GM13977 (cell line): ENCODE measurements at regions of chr2 and their contacts with region 1.

Region 1: GRCh38 chr2:42663106-42663780 is 94.8 kb downstream of the MTA3 start:
- DNase-seq: peak; percentile 72
- CTCF ChIP-seq: peak; percentile 99

Region 2: DNA sequence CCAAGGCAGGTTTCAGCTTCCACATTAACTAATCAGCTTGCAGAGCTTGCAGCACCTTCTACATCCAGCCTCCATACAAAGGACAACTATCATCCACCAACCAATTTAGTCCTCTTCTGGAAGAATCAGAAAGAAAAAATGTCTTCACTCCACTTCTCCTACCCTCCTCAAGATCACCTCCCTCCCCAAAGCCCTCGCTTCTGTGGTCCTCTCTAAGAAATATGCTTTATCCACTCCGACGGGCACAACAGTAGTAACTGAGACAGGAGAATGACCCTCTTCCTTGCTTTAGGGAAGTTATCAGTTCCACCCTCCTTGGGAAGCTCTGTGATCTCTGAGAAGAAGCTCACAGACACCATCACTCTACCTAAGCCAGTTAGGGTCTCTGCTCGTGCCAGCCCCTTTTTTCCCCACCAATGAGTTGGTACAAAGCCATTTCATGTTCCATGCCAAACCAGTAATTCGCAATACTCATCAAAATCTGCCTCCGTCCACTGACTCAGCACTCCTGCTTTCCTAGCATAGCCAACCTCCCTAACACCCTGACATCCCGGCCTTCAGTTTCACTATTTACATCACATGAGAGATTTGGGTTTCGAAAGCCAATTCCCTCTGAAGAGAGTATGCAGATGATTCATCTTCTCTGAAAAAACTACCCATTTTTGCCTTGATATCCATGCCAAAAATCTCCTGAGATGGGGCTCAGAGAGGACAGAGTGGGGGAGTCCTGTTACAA is 729.5 kb before region 1 on chr2:
- in situ Hi-C with region 1: no loop called
- DNase-seq: no peak
- CTCF ChIP-seq: no peak

Region 3: DNA sequence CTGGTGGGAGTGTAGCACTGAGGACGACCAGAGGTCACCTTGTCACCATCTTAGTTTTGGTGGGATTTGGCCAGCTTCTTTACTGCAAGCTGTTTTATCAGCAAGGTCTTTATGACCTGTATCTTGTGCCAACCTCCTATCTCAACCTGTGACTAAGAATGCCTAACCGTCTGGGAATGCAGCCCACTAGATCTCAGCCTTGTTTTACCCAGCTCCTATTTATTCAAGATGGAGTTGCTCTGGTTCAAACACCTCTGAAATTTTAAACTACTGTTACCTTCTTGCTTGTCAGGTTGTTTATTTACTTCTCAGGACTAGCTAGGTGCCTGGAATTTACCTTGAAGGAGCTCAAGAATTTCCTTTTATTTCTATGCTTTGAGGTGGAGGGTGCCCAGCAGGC is 160.0 kb before region 1 on chr2:
- in situ Hi-C with region 1: loop called (anchors 5 kb)
- DNase-seq: no peak
- CTCF ChIP-seq: no peak